ENCODE measurements at regions of chr7 and their contacts with region 1.

Region 1: GRCh38 chr7:150793569-150794238 is 6.5 kb downstream of the TMEM176B start:
- DNase-seq: no peak
- H3K4me3 Mint-ChIP-seq: no peak overlapping the region
- H3K27ac Mint-ChIP-seq: no peak overlapping the region
- H3K4me1 Mint-ChIP-seq: no peaks in the 10 kb centered on the region
- H3K27me3 Mint-ChIP-seq: peaks cover 11% of the 10 kb centered on the region

Region 2: DNA sequence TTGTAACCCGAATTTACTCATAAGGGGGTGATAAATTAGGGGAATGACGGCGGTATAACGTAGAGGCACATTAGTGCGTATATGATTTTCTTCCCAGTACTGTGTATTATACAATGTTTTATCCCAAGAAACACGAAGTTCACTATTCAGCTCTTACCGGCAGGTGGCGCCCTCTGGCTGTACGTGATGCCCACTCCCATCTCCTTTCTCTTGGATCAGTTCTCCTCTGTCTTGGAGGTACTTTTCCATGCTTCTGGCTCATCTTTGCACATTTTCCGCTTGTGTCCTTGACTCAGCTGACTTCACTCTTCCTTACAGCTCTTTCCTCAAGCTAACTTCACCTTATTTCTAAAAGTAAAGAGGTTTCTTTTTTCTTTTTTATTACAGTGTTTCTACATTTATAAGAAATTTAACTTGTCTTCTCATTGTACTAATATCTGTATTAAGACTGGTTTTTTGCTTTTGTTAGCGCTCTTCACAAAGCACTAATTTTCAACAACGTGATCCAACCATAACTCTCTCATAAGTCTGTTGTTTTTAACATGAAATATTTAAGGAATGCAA is 14.9 kb before region 1 on chr7:
- CTCF ChIA-PET with region 1: interaction called, 15 read pairs
- intact Hi-C with region 1: no loop called
- DNase-seq: peak; percentile 87
- H3K4me3 Mint-ChIP-seq: no peak overlapping the region
- H3K27ac Mint-ChIP-seq: no peak overlapping the region
- H3K4me1 Mint-ChIP-seq: peaks cover 4% of the 10 kb centered on the region
- H3K27me3 Mint-ChIP-seq: peaks cover 3% of the 10 kb centered on the region

Measured in activated naive CD4-positive, alpha-beta T cell treated with anti-CD3 and anti-CD28 coated beads for 36 hours (primary cell).